ENCODE measurements at regions of chr10 and their contacts with region 1.

Region 1: GRCh38 chr10:28580825-28581224 is 47.9 kb downstream of the WAC start:
- DNase-seq: no peak
- H3K4me3 ChIP-seq: no peak overlapping the region
- H3K27ac ChIP-seq: no peak overlapping the region
- H3K4me1 ChIP-seq: peaks cover 57 to 75% (median 64%) of the 10 kb centered on the region in 4 donors
- H3K27me3 ChIP-seq: no peaks in the 10 kb centered on the region
- CTCF ChIP-seq: no peak
- EP300 ChIP-seq: no peak
- POLR2A ChIP-seq: no peak

Region 2: DNA sequence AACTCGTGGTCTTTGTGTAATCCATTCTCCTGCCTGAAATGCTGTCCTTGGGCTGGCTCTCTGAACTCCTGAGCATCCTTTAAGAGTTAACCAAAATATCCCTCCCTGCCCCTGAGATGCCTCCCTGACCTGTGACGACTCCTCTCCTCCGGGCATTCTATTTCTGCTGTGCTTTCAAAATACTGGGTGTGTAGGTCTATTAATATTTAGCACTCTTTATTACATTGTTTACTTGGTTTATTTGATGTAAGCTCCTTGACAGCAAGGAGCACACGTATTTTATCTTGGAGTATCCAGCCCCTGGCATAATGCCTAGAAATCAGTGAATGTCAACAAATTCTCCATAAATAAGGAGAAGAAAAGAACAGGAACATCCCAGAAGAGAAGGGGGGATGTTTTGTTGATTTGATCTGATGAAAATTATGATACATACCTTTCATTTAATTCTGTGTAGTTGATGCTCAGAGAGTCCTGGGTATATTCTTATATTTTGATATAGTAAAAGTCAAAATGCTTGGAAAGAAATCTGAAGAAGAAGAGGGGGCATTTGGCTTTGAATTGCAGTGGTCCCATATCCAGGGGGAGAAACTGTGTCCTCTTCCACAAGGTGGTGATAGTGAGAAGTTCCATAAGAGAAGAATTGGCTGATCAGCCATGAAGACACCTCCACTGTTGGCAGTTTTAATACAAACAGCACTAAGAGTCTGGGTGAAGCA is 170.2 kb before region 1 on chr10:
- intact Hi-C with region 1: no loop called
- DNase-seq: no peak
- H3K4me3 ChIP-seq: no peak overlapping the region
- H3K27ac ChIP-seq: no peak overlapping the region
- H3K4me1 ChIP-seq: peaks cover 0 to 5% (median 0%) of the 10 kb centered on the region in 4 donors
- H3K27me3 ChIP-seq: no peaks in the 10 kb centered on the region
- CTCF ChIP-seq: no peak
- EP300 ChIP-seq: no peak
- POLR2A ChIP-seq: no peak

Region 3: GRCh38 chr10:28545967-28546644 is 34.7 kb before region 1 on chr10:
- intact Hi-C with region 1: loop called (anchors 5 kb)
- DNase-seq: no peak
- H3K4me3 ChIP-seq: no peak overlapping the region
- H3K27ac ChIP-seq: no peak overlapping the region
- H3K4me1 ChIP-seq: peaks cover 24 to 76% (median 59%) of the 10 kb centered on the region in 4 donors
- H3K27me3 ChIP-seq: no peaks in the 10 kb centered on the region
- CTCF ChIP-seq: no peak
- EP300 ChIP-seq: no peak
- POLR2A ChIP-seq: no peak

Region 4: DNA sequence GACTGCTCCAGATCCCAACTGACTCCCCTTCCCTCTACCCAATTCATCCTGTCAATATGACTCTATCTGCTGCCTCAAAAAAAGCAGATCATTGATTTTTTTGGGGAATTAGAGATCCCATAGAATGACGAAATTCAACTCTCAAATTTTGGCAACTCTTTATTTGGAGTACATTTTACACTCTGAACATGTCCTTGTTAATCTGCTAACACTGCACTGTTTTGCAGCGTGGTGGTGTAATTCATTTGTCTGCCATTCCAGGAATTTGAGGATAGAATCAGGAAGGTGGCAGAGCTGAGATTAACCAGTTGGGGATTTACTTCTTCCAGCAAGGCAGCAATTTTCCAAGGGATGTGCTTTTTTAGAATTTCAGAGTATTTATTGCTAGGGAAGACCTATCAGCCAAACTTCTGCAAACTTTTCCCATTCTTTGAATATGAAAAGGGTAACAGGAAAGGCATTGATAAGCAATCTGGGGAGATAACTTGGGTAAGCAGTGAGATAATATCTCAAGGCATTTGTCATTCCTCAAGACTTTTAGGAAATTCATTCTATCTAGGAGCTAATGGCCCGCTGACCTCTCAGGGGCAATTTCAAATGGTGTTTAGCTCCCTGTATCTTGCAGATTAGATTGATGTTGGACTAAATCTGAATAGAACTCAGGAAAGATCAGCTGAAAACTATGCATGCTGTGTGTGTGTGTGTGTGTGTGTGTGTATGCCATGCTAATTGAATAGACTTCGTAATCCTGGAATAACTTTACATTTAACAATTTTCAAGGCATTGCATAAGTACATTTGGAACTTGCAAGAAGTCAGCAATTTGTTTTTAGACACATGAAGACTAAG is 106.2 kb after region 1 on chr10:
- intact Hi-C with region 1: no loop called
- DNase-seq: no peak
- H3K4me3 ChIP-seq: no peak overlapping the region
- H3K27ac ChIP-seq: no peak overlapping the region
- H3K4me1 ChIP-seq: no peaks in the 10 kb centered on the region
- H3K27me3 ChIP-seq: peaks cover 0 to 9% (median 0%) of the 10 kb centered on the region in 4 donors
- CTCF ChIP-seq: no peak
- EP300 ChIP-seq: no peak
- POLR2A ChIP-seq: no peak